ENCODE measurements at regions of chr2 and their contacts with region 1.

Region 1: GRCh38 chr2:74690571-74690970 is 36.5 kb downstream of the SEMA4F start:
- DNase-seq: peak; percentile 68
- H3K4me3 ChIP-seq: no peak overlapping the region
- H3K27ac ChIP-seq: no peak overlapping the region
- H3K4me1 ChIP-seq: no peaks in the 10 kb centered on the region
- H3K27me3 ChIP-seq: peaks cover 22% of the 10 kb centered on the region in 2 experiments
- CTCF ChIP-seq: peak; percentile 61 to 65
- POLR2A ChIP-seq: no peak

Region 2: DNA sequence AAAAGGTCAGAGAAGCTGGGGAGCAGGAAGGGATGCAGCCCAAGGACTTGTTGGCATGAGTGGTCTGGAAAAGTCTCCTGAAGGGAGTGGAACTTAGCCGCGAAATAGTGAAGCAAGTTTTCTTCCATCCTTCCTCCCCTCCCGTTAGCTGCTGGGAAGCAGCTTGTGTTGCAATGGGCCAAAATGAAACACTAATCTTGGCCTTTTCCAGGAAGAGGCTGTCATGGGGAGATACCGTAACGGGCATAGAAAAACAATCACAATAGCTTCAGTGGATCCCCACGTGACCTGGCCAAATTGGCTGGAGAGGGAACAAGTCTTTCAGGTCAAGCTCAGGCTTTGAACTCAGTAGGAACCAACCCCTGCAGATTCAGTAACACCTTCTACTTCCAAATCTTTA is 12.8 kb after region 1 on chr2:
- CTCF ChIA-PET with region 1: interaction called, 13 read pairs
- POLR2A ChIA-PET with region 1: no interaction called
- dilution Hi-C with region 1: no loop called
- intact Hi-C with region 1: no loop called
- DNase-seq: no peak
- H3K4me3 ChIP-seq: no peak overlapping the region
- H3K27ac ChIP-seq: no peak overlapping the region
- H3K4me1 ChIP-seq: no peaks in the 10 kb centered on the region
- H3K27me3 ChIP-seq: peaks cover 16 to 21% of the 10 kb centered on the region in 2 experiments
- CTCF ChIP-seq: no peak
- POLR2A ChIP-seq: no peak

Region 3: GRCh38 chr2:74876081-74876886 is 185.7 kb after region 1 on chr2:
- CTCF ChIA-PET with region 1: interaction called, 87 read pairs
- POLR2A ChIA-PET with region 1: no interaction called
- dilution Hi-C with region 1: no loop called
- intact Hi-C with region 1: loop called (anchors 1 kb)
- DNase-seq: peak; percentile 63
- H3K4me3 ChIP-seq: no peak overlapping the region
- H3K27ac ChIP-seq: no peak overlapping the region
- H3K4me1 ChIP-seq: no peaks in the 10 kb centered on the region
- H3K27me3 ChIP-seq: no peaks in the 10 kb centered on the region
- CTCF ChIP-seq: peak; percentile 52 to 62
- POLR2A ChIP-seq: no peak